ENCODE measurements at regions of chr17 and their contacts with region 1.

Region 1: DNA sequence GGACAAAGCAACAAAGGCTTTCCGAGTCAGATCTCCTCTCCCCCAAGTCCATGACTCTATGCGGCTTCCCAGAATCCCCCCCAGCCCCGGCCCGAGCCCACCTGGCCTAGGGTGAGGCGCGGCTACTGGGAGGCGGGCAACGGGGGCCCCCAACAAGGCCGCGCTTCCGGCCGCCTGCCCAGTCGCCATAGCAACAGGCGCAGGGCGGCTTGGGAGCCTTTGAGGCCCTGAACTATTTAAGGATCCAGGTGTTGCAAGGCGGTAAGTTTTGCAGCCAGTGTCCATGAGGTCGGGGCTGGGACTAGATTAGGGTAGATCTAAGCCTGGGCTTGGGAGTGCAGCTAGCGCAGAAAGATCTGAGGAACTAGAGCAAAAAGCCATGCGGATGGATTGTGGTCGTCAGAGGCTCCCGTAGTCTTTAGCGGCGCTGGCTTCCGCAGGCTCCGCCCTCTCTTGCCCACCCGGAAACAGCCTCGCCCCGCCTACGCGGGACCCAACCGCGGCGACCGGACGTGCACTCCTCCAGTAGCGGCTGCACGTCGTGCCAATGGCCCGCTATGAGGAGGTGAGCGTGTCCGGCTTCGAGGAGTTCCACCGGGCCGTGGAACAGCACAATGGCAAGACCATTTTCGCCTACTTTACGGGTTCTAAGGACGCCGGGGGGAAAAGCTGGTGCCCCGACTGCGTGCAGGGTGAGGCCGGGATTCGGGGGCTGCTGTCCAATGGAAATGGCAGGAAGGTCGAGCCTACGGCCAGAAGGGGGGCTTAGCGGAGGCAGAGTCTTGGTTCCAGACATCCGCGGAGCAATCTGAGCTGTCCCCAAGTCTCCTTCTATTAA is at the starts of genes KIAA0753 and TXNDC17:
- DNase-seq: peak; percentile 96
- ATAC-seq: peak; percentile 81
- H3K4me3 Mint-ChIP-seq: peak within 1 kb of the TSS; percentile 92
- H3K27ac Mint-ChIP-seq: peak within 1 kb of the TSS; percentile 92
- H3K4me1 Mint-ChIP-seq: peaks cover 59% of the 10 kb centered on the region
- H3K27me3 Mint-ChIP-seq: no peaks in the 10 kb centered on the region
- total RNA-seq, gene KIAA0753: 17.1 to 24.9 TPM
- total RNA-seq, gene TXNDC17: 52.4 to 122 TPM

Region 2: GRCh38 chr17:5281814-5282653 is 1358.7 kb before region 1 on chr17 and contains the start of gene RABEP1:
- CTCF ChIA-PET with region 1: no interaction called
- POLR2A ChIA-PET with region 1: no interaction called
- intact Hi-C with region 1: loop called in 1 of 2 experiments (anchors 5 kb)
- DNase-seq: peak; percentile 97
- ATAC-seq: peak; percentile 81
- H3K4me3 Mint-ChIP-seq: peak within 1 kb of the TSS; percentile 86
- H3K27ac Mint-ChIP-seq: peak within 1 kb of the TSS; percentile 90
- H3K4me1 Mint-ChIP-seq: peaks cover 32% of the 10 kb centered on the region
- H3K27me3 Mint-ChIP-seq: no peaks in the 10 kb centered on the region
- total RNA-seq, gene RABEP1: 60.4 to 66.2 TPM

Region 3: DNA sequence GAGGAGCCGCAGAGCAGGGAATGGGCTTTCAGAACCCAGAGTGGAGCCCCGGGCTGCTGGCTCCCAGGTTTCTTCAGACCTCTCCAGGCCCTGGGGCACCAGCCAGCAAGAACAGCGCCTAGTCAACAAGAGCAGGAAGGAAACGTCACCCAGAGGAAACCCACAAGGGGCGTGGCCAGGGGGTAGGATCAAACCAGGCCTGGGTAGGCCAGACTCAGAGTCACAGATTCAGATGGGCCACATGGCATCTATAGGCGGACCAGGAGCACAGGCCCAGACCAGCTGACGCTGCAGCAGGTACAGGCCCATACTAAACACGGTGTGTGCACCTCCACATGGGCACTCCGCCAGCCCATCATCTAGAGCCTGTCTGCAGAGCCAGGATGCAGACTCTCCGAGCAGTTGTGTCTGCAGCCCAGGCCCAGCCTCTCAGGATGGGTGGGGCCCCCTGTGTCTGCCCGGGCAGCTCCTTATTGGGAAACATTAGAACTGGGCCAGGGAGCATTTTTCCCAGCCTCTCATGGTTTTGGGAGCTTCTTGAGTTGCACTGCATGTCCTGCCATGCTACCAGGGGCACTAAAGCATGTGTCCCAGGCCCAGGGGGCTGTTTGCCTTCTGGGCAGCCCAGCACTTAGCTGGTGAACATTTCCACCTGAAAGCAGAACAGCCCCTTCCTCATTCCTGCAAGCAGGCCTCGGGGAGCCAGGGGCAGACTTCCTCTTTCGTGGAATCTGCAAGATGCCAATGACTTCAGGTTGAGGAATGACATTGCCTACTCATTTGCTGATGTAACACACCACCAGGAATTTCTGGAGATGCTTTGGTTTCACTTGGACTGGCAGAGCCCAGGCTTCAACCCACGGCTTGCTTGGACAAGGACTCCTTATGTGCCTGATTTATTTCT is 1056.1 kb before region 1 on chr17 and contains the start of gene NLRP1:
- CTCF ChIA-PET with region 1: no interaction called
- POLR2A ChIA-PET with region 1: no interaction called
- intact Hi-C with region 1: loop called (anchors 2 to 10 kb)
- DNase-seq: peak; percentile 97
- ATAC-seq: peak; percentile 93
- H3K4me3 Mint-ChIP-seq: peak within 1 kb of the TSS; percentile 92
- H3K27ac Mint-ChIP-seq: peak within 1 kb of the TSS; percentile 94
- H3K4me1 Mint-ChIP-seq: peaks cover 62% of the 10 kb centered on the region
- H3K27me3 Mint-ChIP-seq: no peaks in the 10 kb centered on the region
- total RNA-seq, gene NLRP1: 31.2 to 34.0 TPM

Region 4: GRCh38 chr17:6069539-6070429 is 571.0 kb before region 1 on chr17 and contains the start of gene WSCD1:
- CTCF ChIA-PET with region 1: no interaction called
- POLR2A ChIA-PET with region 1: no interaction called
- intact Hi-C with region 1: no loop called
- DNase-seq: peak; percentile 28
- ATAC-seq: peak; percentile 12
- H3K4me3 Mint-ChIP-seq: peak within 1 kb of the TSS; percentile 61
- H3K27ac Mint-ChIP-seq: no peak within 1 kb of the TSS
- H3K4me1 Mint-ChIP-seq: peaks cover 10% of the 10 kb centered on the region
- H3K27me3 Mint-ChIP-seq: peaks cover 55% of the 10 kb centered on the region
- total RNA-seq, gene WSCD1: 0.04 to 0.16 TPM

Region 5: DNA sequence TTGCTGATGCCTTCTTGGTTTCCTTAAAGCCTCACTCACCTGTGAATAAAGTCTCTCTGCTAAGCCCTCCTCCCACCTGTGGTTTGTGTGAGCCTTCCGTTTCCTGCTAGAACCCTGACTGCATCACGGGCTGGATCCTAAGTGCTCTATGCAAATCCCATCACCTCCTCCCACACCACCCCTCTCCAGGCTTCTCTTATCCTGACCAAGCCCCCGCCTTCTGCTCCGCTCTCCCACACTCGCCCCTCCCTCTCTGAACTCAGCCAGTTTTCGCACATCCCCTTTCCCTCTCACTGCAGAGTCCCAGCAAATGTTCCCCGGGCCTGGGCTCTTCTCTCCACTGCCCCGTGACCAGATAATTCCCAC is 144.7 kb before region 1 on chr17:
- CTCF ChIA-PET with region 1: no interaction called
- POLR2A ChIA-PET with region 1: no interaction called
- intact Hi-C with region 1: no loop called
- DNase-seq: peak; percentile 49
- ATAC-seq: peak; percentile 78
- H3K4me3 Mint-ChIP-seq: no peak overlapping the region
- H3K27ac Mint-ChIP-seq: no peak overlapping the region
- H3K4me1 Mint-ChIP-seq: peaks cover 20% of the 10 kb centered on the region
- H3K27me3 Mint-ChIP-seq: peaks cover 2% of the 10 kb centered on the region

Region 6: DNA sequence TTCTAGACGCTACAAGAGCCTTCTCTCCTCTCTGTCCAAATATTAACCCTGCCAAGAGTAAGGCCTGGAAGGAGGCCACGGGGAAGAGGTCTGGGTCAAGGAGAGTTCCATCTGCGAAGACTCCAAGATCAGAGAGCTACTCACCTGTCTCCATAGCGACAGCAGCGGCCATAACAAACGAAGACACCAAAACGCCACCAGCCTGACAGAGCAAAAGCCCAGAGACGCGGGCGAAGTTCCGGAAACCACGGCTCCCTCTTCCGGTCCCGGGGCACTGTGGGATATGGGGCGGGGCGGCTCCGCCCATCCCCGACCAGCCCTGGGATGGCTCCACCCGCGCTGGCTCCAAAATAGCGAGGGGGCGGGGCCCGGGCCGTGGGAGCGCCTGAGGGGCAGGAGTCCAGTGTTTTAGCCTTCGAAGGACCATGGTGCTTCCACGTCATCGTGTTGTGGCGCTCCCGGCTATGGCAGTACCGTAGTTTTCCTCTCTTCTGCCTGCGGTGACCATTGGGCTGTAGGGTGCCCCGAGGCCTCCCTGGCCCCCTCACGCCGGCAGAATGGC is 10.7 kb after region 1 on chr17 and contains the starts of genes C17orf100 and MED31:
- CTCF ChIA-PET with region 1: interaction called, 5 read pairs
- POLR2A ChIA-PET with region 1: interaction called, 4 read pairs
- intact Hi-C with region 1: loop called (anchors 1 kb)
- DNase-seq: peak; percentile 97
- ATAC-seq: peak; percentile 95
- H3K4me3 Mint-ChIP-seq: peak within 1 kb of the TSS; percentile 98
- H3K27ac Mint-ChIP-seq: peak within 1 kb of the TSS; percentile 99
- H3K4me1 Mint-ChIP-seq: peaks cover 55% of the 10 kb centered on the region
- H3K27me3 Mint-ChIP-seq: peaks cover 2% of the 10 kb centered on the region
- total RNA-seq, gene C17orf100: 1.6 to 2.0 TPM
- total RNA-seq, gene MED31: 17.7 to 24.5 TPM

Region 7: GRCh38 chr17:8435245-8436168 is 1794.8 kb after region 1 on chr17 and contains the start of gene NDEL1:
- CTCF ChIA-PET with region 1: no interaction called
- POLR2A ChIA-PET with region 1: no interaction called
- intact Hi-C with region 1: loop called in 1 of 2 experiments (anchors 5 kb)
- DNase-seq: peak; percentile 100
- ATAC-seq: peak; percentile 98
- H3K4me3 Mint-ChIP-seq: peak within 1 kb of the TSS; percentile 87
- H3K27ac Mint-ChIP-seq: peak within 1 kb of the TSS; percentile 91
- H3K4me1 Mint-ChIP-seq: peaks cover 29% of the 10 kb centered on the region
- H3K27me3 Mint-ChIP-seq: no peaks in the 10 kb centered on the region
- total RNA-seq, gene NDEL1: 51.9 to 58.6 TPM